ENCODE measurements at regions of chr13 and their contacts with region 1.

Region 1: GRCh38 chr13:35978603-35979316 is 152.4 kb downstream of the DCLK1 start:
- DNase-seq: peak; percentile 78
- H3K4me3 ChIP-seq: no peak overlapping the region
- H3K27ac ChIP-seq: no peak overlapping the region
- H3K4me1 ChIP-seq: peaks cover 7% of the 10 kb centered on the region
- H3K27me3 ChIP-seq: no peaks in the 10 kb centered on the region
- CTCF ChIP-seq: peak; percentile 35 to 50
- POLR2A ChIP-seq: no peak

Region 2: DNA sequence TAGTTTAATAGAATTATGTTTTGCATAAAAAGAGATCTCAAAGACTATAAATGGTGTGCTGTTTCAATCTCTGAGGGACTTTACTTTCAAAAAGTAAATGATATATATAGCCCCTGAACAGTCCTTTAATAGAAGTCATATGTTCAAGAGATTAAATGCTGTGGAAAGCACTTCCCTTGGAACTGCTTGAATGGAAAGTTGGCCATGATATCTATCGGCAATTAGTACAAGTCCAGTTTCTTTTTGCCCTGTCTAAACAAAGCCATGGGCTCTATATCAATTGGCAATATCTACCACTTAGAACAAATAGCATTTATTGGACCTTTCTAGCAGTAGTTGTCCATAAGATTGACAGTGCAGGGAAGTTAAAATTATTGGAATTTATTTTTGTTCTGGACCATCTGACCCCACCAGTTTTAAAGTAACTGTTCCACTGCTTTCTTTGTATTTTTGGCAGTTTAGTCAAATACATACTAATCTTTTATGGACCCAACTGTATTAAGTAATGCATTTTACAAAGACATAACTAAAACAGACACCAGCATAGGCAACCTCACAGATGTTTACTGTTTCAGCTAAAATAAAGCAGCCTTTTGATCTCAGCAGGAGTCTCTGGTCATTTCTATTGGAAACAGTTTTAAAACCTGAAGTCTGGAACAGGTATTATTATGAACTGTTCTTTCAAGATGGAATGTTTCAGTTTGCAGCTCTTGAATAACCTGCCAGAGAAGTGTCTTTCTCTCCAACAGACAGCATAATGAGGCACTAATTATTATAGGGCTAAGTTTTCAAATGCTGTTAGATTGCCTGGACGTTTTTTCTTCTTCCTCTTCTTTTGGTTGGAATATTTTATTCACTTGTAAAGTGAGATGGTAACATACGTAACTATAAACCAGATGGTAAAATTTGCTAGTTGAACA is 130.2 kb before region 1 on chr13:
- CTCF ChIA-PET with region 1: no interaction called
- POLR2A ChIA-PET with region 1: no interaction called
- dilution Hi-C with region 1: no loop called
- intact Hi-C with region 1: no loop called
- DNase-seq: no peak
- H3K4me3 ChIP-seq: no peak overlapping the region
- H3K27ac ChIP-seq: no peak overlapping the region
- H3K4me1 ChIP-seq: no peaks in the 10 kb centered on the region
- H3K27me3 ChIP-seq: no peaks in the 10 kb centered on the region
- CTCF ChIP-seq: no peak
- POLR2A ChIP-seq: no peak

Region 3: DNA sequence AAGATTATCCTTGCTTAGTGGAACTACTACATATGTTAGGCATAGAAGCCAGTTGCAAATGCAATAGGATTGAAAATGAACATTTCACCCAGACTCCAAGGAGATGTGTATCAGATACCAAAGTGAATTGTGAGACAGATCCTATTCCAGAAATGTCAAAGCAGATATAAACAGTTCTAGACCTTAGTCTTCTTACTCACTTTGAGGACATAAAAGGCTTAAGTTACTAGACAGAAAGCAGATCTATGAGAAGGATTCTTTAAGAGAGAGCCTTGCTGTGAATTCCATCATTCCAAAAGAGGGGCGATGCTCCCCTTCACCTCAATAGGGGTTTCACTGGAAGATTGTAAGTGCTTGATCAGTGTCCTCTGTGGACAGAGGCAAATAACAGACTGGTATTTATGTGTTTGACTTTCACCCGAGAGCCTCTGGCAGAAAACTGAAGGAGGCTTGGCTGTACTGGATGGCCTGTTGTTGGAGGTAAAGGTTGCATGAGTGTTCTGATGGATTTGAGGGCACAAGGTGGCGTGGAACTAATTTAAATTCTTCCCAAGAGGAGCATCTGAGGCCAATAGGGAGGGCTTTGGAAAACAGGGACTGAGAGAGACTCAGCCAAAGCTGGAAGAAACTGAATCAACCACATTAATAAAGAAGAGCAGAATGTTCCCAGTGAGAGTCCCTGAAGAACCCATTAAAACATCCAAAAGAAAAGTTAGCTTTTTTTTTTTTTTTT is 42.3 kb before region 1 on chr13:
- CTCF ChIA-PET with region 1: no interaction called
- POLR2A ChIA-PET with region 1: no interaction called
- dilution Hi-C with region 1: no loop called
- intact Hi-C with region 1: no loop called
- DNase-seq: no peak
- H3K4me3 ChIP-seq: no peak overlapping the region
- H3K27ac ChIP-seq: no peak overlapping the region
- H3K4me1 ChIP-seq: no peaks in the 10 kb centered on the region
- H3K27me3 ChIP-seq: peaks cover 1 to 3% of the 10 kb centered on the region in 2 experiments
- CTCF ChIP-seq: no peak
- POLR2A ChIP-seq: no peak

Region 4: GRCh38 chr13:35964868-35965190 is 13.9 kb before region 1 on chr13:
- CTCF ChIA-PET with region 1: interaction called, 10 read pairs
- POLR2A ChIA-PET with region 1: no interaction called
- dilution Hi-C with region 1: no loop called
- intact Hi-C with region 1: no loop called
- DNase-seq: peak; percentile 24
- H3K4me3 ChIP-seq: peak overlapping the region in 1 of 3 experiments; percentile 12
- H3K27ac ChIP-seq: no peak overlapping the region
- H3K4me1 ChIP-seq: peaks cover 9% of the 10 kb centered on the region
- H3K27me3 ChIP-seq: no peaks in the 10 kb centered on the region
- CTCF ChIP-seq: no peak
- POLR2A ChIP-seq: no peak

Region 5: DNA sequence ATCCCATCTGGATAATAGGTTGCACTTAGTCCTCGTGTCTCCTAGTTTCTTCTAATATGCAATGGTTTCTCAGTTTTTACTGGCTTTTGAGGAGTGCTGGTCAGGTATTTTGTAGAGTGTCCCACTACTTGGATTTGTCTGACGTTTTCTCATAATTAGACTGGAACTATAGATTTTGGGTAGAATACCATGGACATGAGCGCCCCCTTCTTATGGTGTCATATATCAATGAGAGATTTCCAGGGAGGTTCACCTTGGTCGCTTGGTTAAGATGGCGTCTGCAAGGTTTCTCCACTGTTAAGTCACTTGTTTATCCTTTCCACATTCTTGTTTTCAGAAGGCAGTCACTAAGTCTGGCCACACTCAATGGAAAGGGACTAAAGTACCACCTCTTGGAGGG is 228.9 kb after region 1 on chr13:
- CTCF ChIA-PET with region 1: interaction called, 3 read pairs
- POLR2A ChIA-PET with region 1: no interaction called
- dilution Hi-C with region 1: no loop called
- intact Hi-C with region 1: loop called (anchors 5 kb)
- DNase-seq: no peak
- H3K4me3 ChIP-seq: no peak overlapping the region
- H3K27ac ChIP-seq: no peak overlapping the region
- H3K4me1 ChIP-seq: no peaks in the 10 kb centered on the region
- H3K27me3 ChIP-seq: no peaks in the 10 kb centered on the region
- CTCF ChIP-seq: no peak
- POLR2A ChIP-seq: no peak